ENCODE measurements at regions of chr5 and their contacts with region 1.

Region 1: DNA sequence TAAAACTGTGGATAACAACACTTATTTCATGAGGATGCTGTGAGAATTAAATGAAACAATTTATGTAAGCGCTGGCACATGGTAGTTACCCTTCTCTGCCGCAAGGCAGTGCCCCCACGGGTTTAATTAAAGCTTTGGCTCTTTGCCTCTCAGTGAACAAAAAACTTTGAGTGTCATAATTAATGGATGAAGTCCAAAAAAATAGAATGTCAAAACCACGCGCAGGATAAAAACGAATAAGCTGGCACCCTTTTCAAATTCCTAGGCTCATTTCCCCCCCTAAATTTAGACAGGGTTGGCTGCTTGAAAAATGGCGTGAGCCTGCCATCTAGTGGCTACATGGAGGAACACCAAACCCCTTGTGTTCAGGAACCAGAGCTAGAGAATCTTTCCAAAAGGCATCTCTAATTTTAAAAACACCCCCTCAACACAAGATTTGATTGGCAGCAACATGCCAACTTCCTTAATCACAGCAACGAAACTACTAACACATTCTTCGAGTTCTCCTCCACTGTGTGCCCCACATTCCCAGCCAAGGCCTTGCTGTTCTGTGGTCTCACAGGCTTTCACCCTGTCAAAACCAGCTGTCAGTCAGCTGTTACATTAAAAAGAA is 29.0 kb upstream of the CCNG1 start:
- DNase-seq: peak; percentile 34 to 95 (median 68)

Region 2: GRCh38 chr5:161851691-161852299 is 1556.6 kb before region 1 on chr5:
- intact Hi-C with region 1: loop called (anchors 5 kb)
- DNase-seq: no peak

Region 3: GRCh38 chr5:162209005-162209605 is 1199.3 kb before region 1 on chr5:
- intact Hi-C with region 1: loop called (anchors 10 kb)
- DNase-seq: peak in 7 of 10 donors; percentile 10 to 84 (median 39)